Right ventricle myocardium inferior (tissue), 1 donor: ENCODE measurements at regions of chr16 and their contacts with region 1.

Region 1: DNA sequence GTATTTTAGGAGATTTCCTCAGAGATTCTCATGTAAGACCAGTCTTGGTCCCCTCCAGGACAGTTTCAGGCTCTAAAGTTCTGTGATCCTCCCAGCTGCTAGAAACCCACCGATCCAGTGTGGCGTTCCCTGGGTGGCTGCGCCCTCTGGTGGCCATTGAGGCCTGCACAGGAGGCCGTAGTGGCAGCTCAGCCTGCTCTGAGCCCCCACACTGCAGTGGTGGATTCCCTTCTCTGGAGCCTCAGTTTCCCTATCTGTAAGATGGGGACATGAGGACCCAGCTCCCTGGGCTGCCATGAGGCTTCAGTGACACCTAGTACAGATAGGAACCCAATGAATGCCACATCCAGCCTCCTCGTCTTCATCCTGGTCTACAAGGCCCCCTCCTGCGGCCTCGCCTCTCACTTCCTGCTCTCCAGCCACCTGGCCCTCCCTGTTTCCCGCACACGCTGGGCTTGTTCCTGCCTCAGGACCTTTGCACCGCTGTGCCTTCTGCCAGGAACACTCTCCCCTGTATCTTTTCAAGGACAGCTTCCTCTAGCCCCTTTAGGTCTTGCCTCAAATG is 16.5 kb downstream of the CCDC102A start:
- DNase-seq: peak; percentile 90
- ATAC-seq: peak; percentile 76

Region 2: DNA sequence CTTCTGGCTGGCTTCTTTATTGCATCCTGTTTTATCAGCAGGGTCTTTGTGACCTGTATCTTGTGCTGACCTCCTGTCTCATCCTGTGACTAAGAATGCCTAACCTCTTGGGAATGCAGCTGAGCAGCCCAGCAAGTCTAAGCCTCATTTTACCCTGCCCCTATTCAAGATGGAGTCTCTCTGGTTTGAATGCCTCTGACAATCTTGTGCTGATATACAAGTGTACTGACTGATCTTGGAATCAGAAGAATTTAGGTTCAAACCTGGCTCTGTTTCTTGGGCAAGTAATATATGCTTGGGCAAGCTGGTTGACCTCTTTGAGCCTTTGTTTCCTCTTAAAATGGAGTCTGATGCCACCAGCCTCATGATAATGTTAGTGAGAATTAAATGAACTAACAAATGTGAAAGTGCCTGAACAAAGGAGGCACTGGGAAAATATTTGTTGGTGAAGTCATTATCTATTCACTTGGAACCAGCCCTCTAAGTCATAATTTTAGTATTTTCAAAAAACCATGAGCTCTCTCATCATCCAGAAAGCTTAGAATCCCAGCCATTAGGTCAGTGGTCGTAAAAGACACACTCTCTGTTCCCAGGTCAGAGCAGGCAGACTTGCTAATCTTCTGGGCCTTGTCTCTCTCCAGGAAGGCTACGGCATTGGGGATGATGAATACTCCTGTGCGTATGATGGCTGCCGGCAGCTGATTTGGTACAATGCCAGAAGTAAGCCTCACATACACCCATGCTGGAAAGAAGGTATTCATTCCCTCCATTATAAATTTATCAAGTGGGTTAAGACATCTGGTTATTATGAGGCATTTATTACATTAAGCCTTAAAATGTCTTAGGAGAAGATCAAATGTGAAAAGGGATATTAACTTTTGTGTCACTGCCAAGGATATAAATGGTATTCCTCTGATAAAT is 292.9 kb before region 1 on chr16:
- intact Hi-C with region 1: no loop called
- DNase-seq: no peak
- ATAC-seq: no peak

Region 3: DNA sequence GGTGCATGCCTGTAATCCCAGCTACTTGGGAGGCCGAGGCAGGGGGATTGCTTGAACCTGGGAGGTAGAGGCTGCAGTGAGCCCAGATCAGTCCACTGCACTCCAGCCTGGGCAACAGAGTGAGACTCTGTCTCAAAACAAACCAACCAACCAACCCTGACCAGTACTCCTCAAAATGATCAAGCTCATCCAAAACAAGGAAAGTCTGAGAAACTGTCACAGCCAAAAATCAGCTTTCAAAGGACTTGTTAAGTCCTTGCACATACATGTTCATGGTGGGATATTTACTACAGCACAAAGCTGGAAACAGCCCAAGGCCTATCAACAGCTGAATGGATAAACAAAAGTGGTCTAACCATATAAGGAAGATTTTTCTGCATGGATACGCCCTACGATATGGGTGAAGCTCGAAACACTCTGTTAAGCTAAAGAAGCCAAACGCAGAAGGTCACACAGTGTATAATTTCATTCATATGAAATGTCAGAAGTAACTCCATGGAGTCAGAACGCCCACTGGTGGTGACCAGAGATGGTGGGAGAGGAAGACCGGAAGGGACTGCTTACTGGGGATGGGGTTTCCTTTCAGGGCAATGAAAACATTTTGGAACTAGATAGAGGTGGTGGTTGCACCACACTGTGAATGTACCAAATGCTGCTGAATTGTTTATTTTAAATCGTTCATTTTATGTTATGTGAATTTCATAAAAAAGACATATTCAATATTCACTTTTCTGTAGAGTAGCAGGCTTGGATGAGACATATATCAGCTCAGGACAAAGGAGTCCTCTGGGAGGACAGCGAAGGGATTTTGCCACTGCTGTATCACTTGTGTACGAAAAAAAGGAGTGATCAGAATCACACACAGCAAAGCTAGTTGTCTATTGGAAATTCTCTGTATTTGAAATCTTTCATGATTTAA is 97.6 kb before region 1 on chr16:
- intact Hi-C with region 1: loop called (anchors 2 kb)
- DNase-seq: no peak
- ATAC-seq: peak; percentile 49

Region 4: GRCh38 chr16:57447186-57447962 is 72.5 kb before region 1 on chr16 and contains the starts of genes CIAPIN1 and COQ9:
- intact Hi-C with region 1: loop called (anchors 2 kb)
- DNase-seq: peak; percentile 98
- ATAC-seq: peak; percentile 99
- total RNA-seq, gene CIAPIN1: 43.7 TPM
- total RNA-seq, gene COQ9: 215 TPM

Region 5: GRCh38 chr16:57462209-57462977 is 57.5 kb before region 1 on chr16 and contains the start of gene POLR2C:
- intact Hi-C with region 1: no loop called
- DNase-seq: peak; percentile 96
- ATAC-seq: peak; percentile 86
- total RNA-seq, gene POLR2C: 37.1 TPM

Region 6: GRCh38 chr16:57475711-57476339 is 44.1 kb before region 1 on chr16:
- intact Hi-C with region 1: loop called (anchors 5 kb)
- DNase-seq: peak; percentile 73
- ATAC-seq: no peak